ENCODE measurements at regions of chr1 and their contacts with region 1.

Region 1: DNA sequence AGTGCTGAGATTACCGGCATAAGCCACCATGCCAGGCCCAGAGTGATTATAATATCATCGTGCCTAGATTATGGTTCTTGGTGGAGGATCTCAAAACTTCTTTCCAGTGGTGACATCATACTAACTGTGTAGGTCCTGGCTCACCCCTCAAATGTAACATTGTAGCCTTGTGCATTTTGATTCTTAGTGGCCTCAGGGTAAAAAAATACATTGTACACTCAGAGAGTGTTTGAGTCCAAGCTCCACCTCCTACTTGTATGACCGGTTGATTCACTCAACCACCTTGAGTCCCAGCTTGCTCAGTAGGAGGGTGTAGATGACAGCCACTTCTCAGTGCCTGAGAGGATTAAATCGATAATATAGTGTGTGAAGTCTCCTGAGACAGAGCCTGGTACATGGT is 38.3 kb downstream of the NCMAP start:
- DNase-seq: no peak
- ATAC-seq: no peak
- H3K4me3 ChIP-seq: no peak overlapping the region
- H3K27ac ChIP-seq: no peak overlapping the region
- H3K4me1 ChIP-seq: 0 out of 2 replicates have a peak, but pooled peaks cover 5% of the 10 kb centered on the region
- H3K27me3 ChIP-seq: no peaks in the 10 kb centered on the region
- CTCF ChIP-seq: no peak

Region 2: GRCh38 chr1:23951571-23952095 is 642.5 kb before region 1 on chr1:
- CTCF ChIA-PET with region 1: no interaction called
- POLR2A ChIA-PET with region 1: no interaction called
- in situ Hi-C with region 1: no loop called
- intact Hi-C with region 1: no loop called
- DNase-seq: peak; percentile 94
- ATAC-seq: peak; percentile 84
- H3K4me3 ChIP-seq: peak overlapping the region in 1 of 2 experiments; percentile 36; a peak in 2 of 4 replicates
- H3K27ac ChIP-seq: peak overlapping the region; percentile 75
- H3K4me1 ChIP-seq: peaks cover 41% of the 10 kb centered on the region
- H3K27me3 ChIP-seq: no peaks in the 10 kb centered on the region
- CTCF ChIP-seq: no peak

Region 3: DNA sequence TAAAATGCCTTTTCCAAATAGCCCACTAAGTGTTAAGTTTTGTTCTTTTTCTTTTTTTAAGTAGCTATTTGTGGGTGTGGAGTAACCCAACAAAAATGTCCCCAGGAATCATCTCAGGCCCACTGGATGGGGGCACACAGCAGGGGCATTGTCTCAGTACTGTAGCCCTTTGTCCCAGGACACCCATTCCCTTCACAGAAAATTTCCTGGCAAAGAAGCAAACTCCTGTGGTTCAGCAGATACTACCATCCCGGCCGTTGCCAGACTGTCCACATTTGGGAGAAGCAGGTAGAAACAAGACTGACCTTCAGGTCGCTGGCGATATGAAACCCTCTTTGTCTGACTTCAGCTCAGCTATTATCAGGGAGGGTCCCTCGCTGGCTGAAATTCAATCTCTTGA is 25.2 kb after region 1 on chr1:
- CTCF ChIA-PET with region 1: no interaction called
- POLR2A ChIA-PET with region 1: no interaction called
- in situ Hi-C with region 1: no loop called
- intact Hi-C with region 1: no loop called
- DNase-seq: no peak
- ATAC-seq: no peak
- H3K4me3 ChIP-seq: no peak overlapping the region
- H3K27ac ChIP-seq: no peak overlapping the region
- H3K4me1 ChIP-seq: no peaks in the 10 kb centered on the region
- H3K27me3 ChIP-seq: peaks cover 5% of the 10 kb centered on the region; the same call in 1 of the 2 replicates
- CTCF ChIP-seq: no peak

Region 4: GRCh38 chr1:24727501-24728216 is 133.5 kb after region 1 on chr1:
- CTCF ChIA-PET with region 1: interaction called, 11 read pairs
- POLR2A ChIA-PET with region 1: no interaction called
- in situ Hi-C with region 1: no loop called
- intact Hi-C with region 1: no loop called
- DNase-seq: no peak
- ATAC-seq: peak; percentile 35; the same call in 1 of the 2 replicates
- H3K4me3 ChIP-seq: no peak overlapping the region
- H3K27ac ChIP-seq: 0 out of 2 replicates have a peak overlapping the region, but pooled peaks have one; percentile 14
- H3K4me1 ChIP-seq: peaks cover 24% of the 10 kb centered on the region
- H3K27me3 ChIP-seq: no peaks in the 10 kb centered on the region
- CTCF ChIP-seq: no peak

Region 5: DNA sequence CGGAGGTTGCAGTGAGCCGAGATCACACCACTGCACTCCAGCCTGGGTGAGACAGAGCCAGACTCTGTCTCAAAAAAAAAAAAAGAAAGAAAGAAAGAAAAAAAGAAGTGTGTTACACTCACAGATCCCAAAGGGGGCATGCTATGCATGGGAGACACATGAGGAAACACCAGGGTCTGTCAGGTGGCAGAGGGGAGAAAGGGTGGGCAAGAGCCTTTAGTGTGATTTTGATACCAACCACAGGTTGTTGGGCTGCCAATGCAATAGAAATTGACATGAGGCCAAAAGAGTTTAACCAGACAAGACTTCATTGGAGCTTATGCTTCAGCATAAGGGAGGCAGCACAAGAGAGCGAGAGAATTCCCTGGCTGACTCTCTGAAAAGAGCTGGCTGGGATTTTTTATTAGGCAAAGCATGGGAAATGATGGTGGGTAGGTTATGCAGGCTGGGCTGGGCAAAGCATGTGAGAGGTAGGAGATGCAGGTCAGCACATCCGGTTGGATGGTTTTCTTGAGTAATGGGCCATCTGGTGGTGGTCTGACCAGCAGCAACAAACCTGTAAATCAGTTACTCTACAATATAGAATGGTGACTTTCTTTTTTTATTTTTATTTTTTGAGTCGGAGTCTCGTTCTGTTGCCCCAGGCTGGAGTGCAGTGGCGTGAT is 1415.8 kb after region 1 on chr1:
- CTCF ChIA-PET with region 1: no interaction called
- POLR2A ChIA-PET with region 1: no interaction called
- in situ Hi-C with region 1: no loop called
- intact Hi-C with region 1: no loop called
- DNase-seq: no peak
- ATAC-seq: peak; percentile 74
- H3K4me3 ChIP-seq: no peak overlapping the region
- H3K27ac ChIP-seq: no peak overlapping the region
- H3K4me1 ChIP-seq: 0 out of 2 replicates have a peak, but pooled peaks cover 3% of the 10 kb centered on the region
- H3K27me3 ChIP-seq: no peaks in the 10 kb centered on the region
- CTCF ChIP-seq: no peak

Measured in Panc1 (cell line).